Activated naive CD4-positive, alpha-beta T cell treated with anti-CD3 and anti-CD28 coated beads for 36 hours (primary cell): ENCODE measurements at regions of chr6 and their contacts with region 1.

Region 1: GRCh38 chr6:145734486-145735355 is 599 bp downstream of the EPM2A start:
- DNase-seq: peak; percentile 75
- H3K4me3 Mint-ChIP-seq: peak overlapping the region; percentile 94
- H3K27ac Mint-ChIP-seq: peak overlapping the region; percentile 97
- H3K4me1 Mint-ChIP-seq: peaks cover 21% of the 10 kb centered on the region
- H3K27me3 Mint-ChIP-seq: no peaks in the 10 kb centered on the region

Region 2: GRCh38 chr6:145814501-145815308 is 80.0 kb after region 1 on chr6 and contains the start of gene FBXO30:
- CTCF ChIA-PET with region 1: interaction called, 6 read pairs
- intact Hi-C with region 1: loop called (anchors 1 kb)
- DNase-seq: peak; percentile 81
- H3K4me3 Mint-ChIP-seq: peak within 1 kb of the TSS; percentile 89
- H3K27ac Mint-ChIP-seq: peak within 1 kb of the TSS; percentile 84
- H3K4me1 Mint-ChIP-seq: peaks cover 31% of the 10 kb centered on the region
- H3K27me3 Mint-ChIP-seq: no peaks in the 10 kb centered on the region
- total RNA-seq, gene FBXO30: 2.0 to 2.1 TPM

Region 3: DNA sequence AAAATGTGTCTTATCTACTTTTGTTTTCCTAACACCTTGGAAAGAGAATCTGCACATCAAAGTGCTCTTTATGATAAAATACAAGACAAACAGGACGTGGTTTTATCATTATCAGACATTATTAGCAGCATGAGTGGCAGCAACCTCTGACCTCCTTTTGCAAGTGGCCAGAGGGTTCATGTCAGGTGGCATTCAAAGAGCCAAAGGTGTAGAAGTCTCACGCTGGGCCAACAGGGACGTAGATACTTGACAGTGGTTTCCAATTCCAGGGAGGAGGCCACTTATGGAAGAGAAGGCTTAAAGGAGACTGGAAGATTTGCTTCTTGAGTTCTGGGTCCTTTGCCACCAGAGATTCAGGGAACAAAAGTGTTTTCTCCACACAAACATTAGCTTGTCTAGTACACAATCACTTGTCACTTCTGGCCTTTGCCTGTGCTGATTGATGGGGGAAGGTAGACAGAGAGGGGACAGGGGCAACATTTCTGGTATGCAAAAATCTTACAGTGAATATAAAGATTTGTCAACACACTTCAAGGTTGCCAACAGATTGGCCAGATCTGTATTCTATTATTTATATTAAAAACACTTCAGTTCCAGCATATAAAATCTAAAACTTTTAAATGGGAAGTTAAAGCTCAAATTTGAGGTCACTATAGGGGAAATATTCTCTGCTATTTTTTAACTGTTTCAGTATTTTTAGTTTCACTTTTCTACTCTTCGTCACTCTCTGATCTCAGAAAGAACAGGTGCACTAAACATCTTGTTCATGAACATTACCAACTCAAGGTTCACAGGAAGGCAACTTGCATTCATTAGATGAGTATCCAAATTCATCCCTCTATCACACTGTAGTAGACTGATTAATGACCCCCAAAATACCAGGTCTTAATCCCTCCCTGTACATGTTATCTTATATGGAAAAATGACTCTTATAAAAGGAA is 132.0 kb after region 1 on chr6:
- CTCF ChIA-PET with region 1: interaction called, 3 read pairs
- intact Hi-C with region 1: loop called (anchors 1 kb)
- DNase-seq: no peak
- H3K4me3 Mint-ChIP-seq: no peak overlapping the region
- H3K27ac Mint-ChIP-seq: peak overlapping the region; percentile 13
- H3K4me1 Mint-ChIP-seq: peaks cover 25% of the 10 kb centered on the region
- H3K27me3 Mint-ChIP-seq: no peaks in the 10 kb centered on the region

Region 4: DNA sequence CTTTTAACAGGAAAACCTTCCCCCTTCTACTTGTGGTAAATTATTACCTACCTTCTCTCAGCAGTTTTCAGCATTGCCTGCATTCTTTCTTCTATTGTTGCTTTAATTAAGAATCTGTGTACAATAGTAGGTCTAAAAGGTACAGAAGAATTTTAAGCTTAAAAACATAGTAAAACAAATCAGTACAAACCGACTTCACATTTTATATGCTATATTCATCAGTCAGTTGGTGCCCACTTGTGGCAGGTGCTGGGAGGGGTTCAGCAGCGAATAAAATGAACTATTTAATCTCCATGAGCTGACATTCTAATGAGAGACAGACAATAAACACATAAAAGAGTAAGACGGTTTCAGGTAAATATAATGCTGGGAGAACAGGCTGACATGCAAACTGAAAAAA is 153.2 kb after region 1 on chr6:
- CTCF ChIA-PET with region 1: no interaction called
- intact Hi-C with region 1: loop called (anchors 1 kb)
- DNase-seq: peak; percentile 44
- H3K4me3 Mint-ChIP-seq: no peak overlapping the region
- H3K27ac Mint-ChIP-seq: no peak overlapping the region
- H3K4me1 Mint-ChIP-seq: no peaks in the 10 kb centered on the region
- H3K27me3 Mint-ChIP-seq: no peaks in the 10 kb centered on the region

Region 5: GRCh38 chr6:145963216-145964068 is 228.7 kb after region 1 on chr6:
- CTCF ChIA-PET with region 1: interaction called, 3 read pairs
- intact Hi-C with region 1: loop called (anchors 1 kb)
- DNase-seq: peak; percentile 58
- H3K4me3 Mint-ChIP-seq: peak overlapping the region; percentile 94
- H3K27ac Mint-ChIP-seq: peak overlapping the region; percentile 70
- H3K4me1 Mint-ChIP-seq: peaks cover 48% of the 10 kb centered on the region
- H3K27me3 Mint-ChIP-seq: no peaks in the 10 kb centered on the region

Region 6: DNA sequence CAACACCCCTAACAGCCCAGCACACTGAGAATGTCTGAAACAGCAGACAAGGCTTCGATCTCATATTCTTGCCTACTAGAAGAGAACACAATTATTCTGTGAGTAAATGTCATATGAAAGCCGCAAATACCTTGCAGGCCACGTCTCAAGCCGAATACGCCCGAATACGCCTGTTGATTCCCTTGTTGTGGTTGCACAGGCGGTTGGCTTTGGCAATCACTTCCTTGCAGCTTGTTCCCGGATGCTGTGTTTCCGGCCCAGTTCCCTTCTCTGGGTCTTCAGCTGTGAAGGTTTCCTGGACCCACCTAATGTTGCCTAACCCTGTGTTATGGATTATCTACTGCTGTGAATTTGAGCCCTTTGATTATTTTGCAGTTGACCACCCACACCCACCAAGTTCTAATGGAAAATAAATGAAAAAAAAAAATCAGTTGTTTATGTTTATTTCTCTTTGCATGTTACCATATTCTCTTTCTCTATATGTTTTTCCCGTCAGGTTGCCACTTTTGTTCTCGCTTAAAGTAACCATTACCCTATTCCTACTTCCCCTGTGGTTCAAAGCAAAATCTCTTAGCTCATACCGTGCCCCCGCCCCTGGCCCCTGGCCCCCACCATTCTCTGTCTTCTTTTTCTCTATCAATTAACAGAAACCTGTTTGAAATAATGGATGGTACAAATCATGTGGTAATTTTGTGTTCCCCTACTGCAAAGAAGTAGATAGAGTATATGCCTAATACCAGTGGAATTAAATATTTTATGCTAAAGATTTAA is 1036.4 kb after region 1 on chr6:
- CTCF ChIA-PET with region 1: no interaction called
- intact Hi-C with region 1: loop called (anchors 5 kb)
- DNase-seq: peak; percentile 79
- H3K4me3 Mint-ChIP-seq: peak overlapping the region; percentile 62
- H3K27ac Mint-ChIP-seq: no peak overlapping the region
- H3K4me1 Mint-ChIP-seq: peaks cover 22% of the 10 kb centered on the region
- H3K27me3 Mint-ChIP-seq: no peaks in the 10 kb centered on the region

Region 7: GRCh38 chr6:146850238-146850896 is 1115.6 kb after region 1 on chr6:
- CTCF ChIA-PET with region 1: no interaction called
- intact Hi-C with region 1: loop called (anchors 5 kb)
- DNase-seq: peak; percentile 72
- H3K4me3 Mint-ChIP-seq: no peak overlapping the region
- H3K27ac Mint-ChIP-seq: peak overlapping the region; percentile 71
- H3K4me1 Mint-ChIP-seq: peaks cover 31% of the 10 kb centered on the region
- H3K27me3 Mint-ChIP-seq: peaks cover 7% of the 10 kb centered on the region